ENCODE measurements at regions of chr16 and their contacts with region 1.

Region 1: GRCh38 chr16:53091466-53092211 is 36.8 kb downstream of the CHD9 start:
- DNase-seq: peak; percentile 69 to 87
- ATAC-seq: peak; percentile 6 to 28 (median 16)
- H3K4me3 ChIP-seq: peak overlapping the region; percentile 26
- H3K27ac ChIP-seq: peak overlapping the region; percentile 80
- H3K4me1 ChIP-seq: peaks cover 51% of the 10 kb centered on the region
- H3K27me3 ChIP-seq: no peaks in the 10 kb centered on the region
- CTCF ChIP-seq: no peak

Region 2: DNA sequence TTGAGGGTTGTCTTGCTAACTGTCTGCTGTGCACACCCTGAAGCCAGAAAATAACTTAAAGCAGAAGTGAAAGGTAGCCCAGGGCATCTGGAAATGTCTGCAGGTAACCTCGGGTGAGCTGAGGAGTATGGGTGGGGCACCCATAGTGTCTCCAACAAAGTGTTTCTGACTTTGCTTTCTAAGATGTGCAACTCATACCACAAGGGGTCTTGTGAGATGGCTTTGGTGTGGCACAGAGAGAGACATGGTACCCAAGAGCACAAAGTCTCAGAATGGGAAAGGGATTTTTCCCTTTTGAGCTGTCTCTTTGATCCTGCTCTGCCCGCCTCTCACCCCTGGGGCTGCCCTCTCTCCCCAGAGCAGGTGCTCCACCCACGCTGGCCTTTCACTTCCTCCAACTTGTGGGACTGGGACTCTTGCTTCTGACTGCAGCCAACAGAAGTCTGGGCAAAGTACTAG is 29.9 kb before region 1 on chr16:
- intact Hi-C with region 1: loop called in 1 of 2 experiments (anchors 2 kb)
- DNase-seq: peak in 1 of 2 donors; percentile 49
- ATAC-seq: peak in 3 of 4 donors; percentile 29 to 44 (median 35)
- H3K4me3 ChIP-seq: no peak overlapping the region
- H3K27ac ChIP-seq: peak overlapping the region; percentile 5
- H3K4me1 ChIP-seq: peaks cover 36% of the 10 kb centered on the region
- H3K27me3 ChIP-seq: no peaks in the 10 kb centered on the region
- CTCF ChIP-seq: no peak

Measured in psoas muscle (tissue), 8 donors.